ENCODE measurements at regions of chrX and their contacts with region 1.

Region 1: DNA sequence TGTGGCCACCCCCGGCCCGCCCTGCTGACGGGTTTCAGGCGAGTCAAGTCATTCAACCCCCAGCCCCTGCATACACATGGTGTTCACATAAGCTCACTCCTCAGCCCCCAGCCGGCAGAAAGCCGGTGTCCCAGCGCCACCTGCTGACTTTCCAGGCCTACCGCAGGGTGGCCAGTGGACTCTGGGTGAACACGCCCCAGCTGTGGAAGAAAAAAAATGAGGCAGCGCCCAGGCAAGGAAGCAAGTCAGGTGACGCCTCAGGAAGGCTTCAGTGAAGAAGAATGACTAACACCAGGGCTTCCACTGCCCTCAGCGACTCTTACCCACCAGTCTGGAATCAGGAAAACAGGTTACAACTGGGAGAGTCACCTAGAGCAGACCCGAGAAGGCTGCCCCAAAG is 15.8 kb downstream of the BCAP31 start:
- DNase-seq: peak; percentile 85
- H3K4me3 Mint-ChIP-seq: peak overlapping the region; percentile 8
- H3K27ac Mint-ChIP-seq: peak overlapping the region; percentile 69
- H3K4me1 Mint-ChIP-seq: no peaks in the 10 kb centered on the region
- H3K27me3 Mint-ChIP-seq: no peaks in the 10 kb centered on the region
- CTCF ChIP-seq: peak; percentile 79

Region 2: DNA sequence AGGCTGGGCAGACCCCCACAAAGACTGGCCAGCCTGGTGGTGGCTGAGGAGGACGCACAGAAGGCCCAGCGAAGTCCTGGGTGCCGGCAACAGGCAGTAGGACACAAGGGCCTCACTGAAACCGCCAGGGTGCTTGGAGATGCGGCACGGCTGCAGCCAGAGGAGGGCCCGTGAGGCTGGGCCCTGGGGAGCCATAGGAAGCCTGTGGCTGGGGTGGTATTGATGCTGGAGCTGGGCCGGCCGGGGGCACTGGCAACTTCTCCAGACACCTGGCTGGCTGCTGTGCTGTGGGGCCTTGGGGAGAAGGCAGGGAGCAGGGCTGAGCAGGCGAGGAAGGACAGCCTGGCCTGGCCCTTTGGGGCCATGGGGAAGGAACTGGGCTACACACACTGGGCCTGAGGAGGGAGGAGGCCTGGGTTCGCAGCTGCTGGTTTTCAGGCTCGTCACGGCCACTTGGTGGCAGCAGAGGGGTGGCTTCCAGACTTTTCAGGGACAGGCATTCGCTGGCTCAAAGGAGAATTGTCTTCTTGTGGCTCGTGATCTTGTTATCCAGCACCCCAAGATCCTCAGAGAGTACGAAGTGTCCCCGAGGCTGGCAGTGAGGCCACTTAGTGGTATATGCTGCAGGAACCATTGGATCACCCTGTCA is 153.8 kb before region 1 on chrX:
- CTCF ChIA-PET with region 1: interaction called, 28 read pairs
- POLR2A ChIA-PET with region 1: interaction called, 3 read pairs
- intact Hi-C with region 1: loop called (anchors 2 kb)
- DNase-seq: peak; percentile 61
- H3K4me3 Mint-ChIP-seq: no peak overlapping the region
- H3K27ac Mint-ChIP-seq: no peak overlapping the region
- H3K4me1 Mint-ChIP-seq: no peaks in the 10 kb centered on the region
- H3K27me3 Mint-ChIP-seq: no peaks in the 10 kb centered on the region
- CTCF ChIP-seq: peak; percentile 53

Region 3: GRCh38 chrX:153609917-153610428 is 98.4 kb before region 1 on chrX:
- CTCF ChIA-PET with region 1: interaction called, 12 read pairs
- POLR2A ChIA-PET with region 1: no interaction called
- intact Hi-C with region 1: no loop called
- DNase-seq: peak; percentile 61
- H3K4me3 Mint-ChIP-seq: peak overlapping the region; percentile 10
- H3K27ac Mint-ChIP-seq: no peak overlapping the region
- H3K4me1 Mint-ChIP-seq: no peaks in the 10 kb centered on the region
- H3K27me3 Mint-ChIP-seq: peaks cover 19% of the 10 kb centered on the region
- CTCF ChIP-seq: peak; percentile 67

Region 4: GRCh38 chrX:153719238-153719637 is 10.8 kb after region 1 on chrX:
- CTCF ChIA-PET with region 1: interaction called, 13 read pairs
- POLR2A ChIA-PET with region 1: interaction called, 7 read pairs
- intact Hi-C with region 1: no loop called
- DNase-seq: peak; percentile 33
- H3K4me3 Mint-ChIP-seq: no peak overlapping the region
- H3K27ac Mint-ChIP-seq: no peak overlapping the region
- H3K4me1 Mint-ChIP-seq: peaks cover 8% of the 10 kb centered on the region
- H3K27me3 Mint-ChIP-seq: no peaks in the 10 kb centered on the region
- CTCF ChIP-seq: no peak

Region 5: DNA sequence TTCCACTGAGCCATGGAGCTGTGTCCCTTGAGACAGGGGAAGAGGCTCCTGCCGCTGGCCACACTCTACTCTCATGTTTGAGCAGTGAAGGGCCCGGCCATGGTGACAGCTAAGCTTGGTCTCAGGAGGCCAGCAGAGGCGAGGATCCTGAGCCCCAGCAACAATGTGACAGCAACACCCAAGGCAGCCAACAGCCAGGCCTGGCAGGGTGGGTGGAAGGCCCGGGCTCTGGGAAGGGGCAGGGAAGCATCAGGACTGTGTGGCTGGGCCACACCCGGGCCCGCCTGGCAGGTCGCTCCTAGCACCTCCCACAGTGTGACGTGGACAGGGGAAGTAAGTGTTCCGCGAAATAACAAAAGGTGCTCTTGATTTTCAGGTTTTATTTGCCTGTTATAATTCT is 152.7 kb after region 1 on chrX:
- CTCF ChIA-PET with region 1: no interaction called
- POLR2A ChIA-PET with region 1: no interaction called
- intact Hi-C with region 1: no loop called
- DNase-seq: no peak
- H3K4me3 Mint-ChIP-seq: no peak overlapping the region
- H3K27ac Mint-ChIP-seq: no peak overlapping the region
- H3K4me1 Mint-ChIP-seq: no peaks in the 10 kb centered on the region
- H3K27me3 Mint-ChIP-seq: peaks cover 50% of the 10 kb centered on the region
- CTCF ChIP-seq: no peak

Measured in MCF 10A (cell line).